ENCODE measurements at regions of chr3 and their contacts with region 1.

Region 1: DNA sequence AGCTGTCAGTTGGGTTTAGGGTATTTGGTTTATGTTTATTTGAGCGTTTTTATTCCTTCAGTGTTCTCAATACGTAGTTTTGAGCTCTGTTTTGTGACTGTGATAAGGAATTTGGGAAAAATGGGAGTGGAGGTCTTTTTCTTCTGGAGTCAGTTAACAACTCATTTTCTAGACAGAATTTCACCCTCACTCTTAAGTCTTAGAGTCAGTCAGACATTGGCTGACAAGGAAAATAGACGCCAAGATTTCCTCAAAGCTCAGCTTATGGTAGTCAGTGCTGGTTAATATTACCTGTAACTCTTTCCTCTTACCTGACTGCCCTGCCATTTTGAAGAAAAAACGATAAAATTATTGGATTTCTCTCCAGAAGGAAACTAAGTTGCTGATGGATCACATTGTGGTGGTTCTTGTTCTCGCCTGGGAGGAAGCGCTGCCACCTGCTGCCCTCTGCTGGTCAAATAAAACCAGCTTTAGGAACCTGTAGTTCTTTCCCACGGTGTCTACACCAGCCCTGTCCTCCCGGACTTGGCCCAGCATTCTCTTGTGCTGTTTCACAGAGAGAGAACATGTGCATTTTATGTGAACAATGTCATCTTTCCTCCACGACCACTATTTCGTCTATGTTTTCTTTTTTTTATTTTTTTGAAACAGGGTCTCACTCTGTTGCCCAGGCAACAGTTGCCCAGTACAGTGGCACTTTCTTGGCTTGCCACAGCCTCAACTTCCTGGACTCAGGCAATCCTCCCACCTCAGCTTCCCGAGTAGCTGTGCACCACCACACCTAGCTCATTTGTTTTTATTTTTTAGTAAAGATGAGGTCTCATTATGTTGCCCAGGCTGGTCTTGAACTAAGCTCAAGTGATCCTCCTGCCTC is 41.4 kb upstream of the UMPS start:
- DNase-seq: peak; percentile 82 to 93
- ATAC-seq: peak; percentile 98 to 99
- H3K4me3 ChIP-seq: no peak overlapping the region
- H3K27ac ChIP-seq: no peak overlapping the region
- H3K4me1 ChIP-seq: no peaks in the 10 kb centered on the region
- CTCF ChIP-seq: peak; percentile 96
- EP300 ChIP-seq: no peak
- POLR2A ChIP-seq: no peak
- RAD21 ChIP-seq: peak; percentile 94

Region 2: DNA sequence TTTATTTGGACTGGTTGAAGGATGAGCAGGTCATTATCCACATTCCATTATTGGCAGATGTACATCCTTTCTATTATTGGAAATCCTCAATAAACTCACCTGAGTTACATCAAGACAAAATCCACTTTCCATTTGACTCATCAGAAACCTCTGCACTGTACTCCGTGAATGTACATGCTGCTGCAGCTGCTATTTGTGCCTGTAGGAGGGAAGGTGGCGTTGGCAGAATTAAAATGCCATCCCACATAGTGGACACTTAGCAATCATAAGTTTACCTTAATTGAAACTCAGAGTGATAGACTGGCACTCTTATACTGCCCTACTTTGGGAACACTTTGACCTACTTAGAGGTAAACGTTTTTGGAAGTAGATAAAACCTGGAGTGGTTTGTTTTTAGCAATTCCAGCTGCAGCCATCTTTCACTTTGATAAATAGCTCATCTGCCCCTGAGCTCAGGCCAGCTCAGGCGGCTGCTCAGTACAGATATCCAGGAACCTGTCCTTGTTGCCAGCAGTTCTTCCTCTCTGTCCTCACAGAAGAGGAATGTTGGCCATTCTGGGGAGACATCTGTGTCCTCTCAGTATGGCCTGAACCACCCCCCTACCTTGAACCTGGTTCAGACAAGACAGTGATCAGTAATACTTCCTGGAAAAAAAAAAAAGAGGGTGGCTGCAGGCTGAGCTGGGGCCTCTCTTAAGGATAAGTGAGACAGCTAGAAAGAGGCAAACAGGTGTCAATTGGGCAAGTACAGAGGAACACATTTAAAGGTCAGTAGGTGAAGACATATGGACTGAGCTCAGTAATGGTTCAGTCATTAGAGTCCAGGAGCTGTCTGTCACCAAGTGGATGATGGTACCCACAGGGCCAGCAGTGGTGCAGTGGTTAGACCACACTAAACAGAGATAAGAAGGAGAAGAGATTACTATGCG is 112.0 kb before region 1 on chr3:
- CTCF ChIA-PET with region 1: interaction called, 42 read pairs
- POLR2A ChIA-PET with region 1: no interaction called
- DNase-seq: no peak
- ATAC-seq: peak in 1 of 2 experiments; percentile 68; a peak in 3 of 6 replicates
- H3K4me3 ChIP-seq: no peak overlapping the region
- H3K27ac ChIP-seq: no peak overlapping the region
- H3K4me1 ChIP-seq: no peaks in the 10 kb centered on the region
- CTCF ChIP-seq: no peak
- EP300 ChIP-seq: no peak
- POLR2A ChIP-seq: no peak
- RAD21 ChIP-seq: no peak

Region 3: GRCh38 chr3:124634210-124635168 is 54.3 kb before region 1 on chr3:
- CTCF ChIA-PET with region 1: interaction called, 12 read pairs
- POLR2A ChIA-PET with region 1: no interaction called
- DNase-seq: peak in 1 of 2 experiments; percentile 10
- ATAC-seq: peak in 1 of 2 experiments; percentile 33; a peak in 2 of 6 replicates
- H3K4me3 ChIP-seq: no peak overlapping the region; the same call in 2 of the 3 replicates
- H3K27ac ChIP-seq: peak overlapping the region; percentile 24 to 55; a peak in 4 of 6 replicates
- H3K4me1 ChIP-seq: peaks cover 26% of the 10 kb centered on the region
- CTCF ChIP-seq: no peak
- EP300 ChIP-seq: no peak
- POLR2A ChIP-seq: no peak
- RAD21 ChIP-seq: no peak

Region 4: DNA sequence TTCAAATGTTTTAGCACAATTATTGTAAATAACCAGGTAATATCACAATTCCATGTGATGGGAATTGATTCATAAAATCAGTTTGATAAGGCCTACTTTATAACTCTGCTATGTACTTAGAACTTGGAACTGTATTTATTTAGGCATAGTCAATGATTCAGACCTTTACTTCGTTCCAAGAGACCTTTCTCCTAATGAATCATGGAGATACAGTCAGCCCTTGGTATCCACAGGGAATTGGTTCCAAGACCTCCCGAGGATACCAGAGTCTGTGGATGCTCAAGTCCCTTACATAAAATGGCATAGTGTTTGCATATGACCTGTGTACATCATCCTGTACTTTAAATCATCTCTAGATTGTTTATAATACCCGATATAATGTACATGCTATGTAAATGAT is 19.3 kb before region 1 on chr3:
- CTCF ChIA-PET with region 1: interaction called, 22 read pairs
- POLR2A ChIA-PET with region 1: no interaction called
- DNase-seq: peak; percentile 25 to 38
- ATAC-seq: peak; percentile 84 to 92
- H3K4me3 ChIP-seq: no peak overlapping the region
- H3K27ac ChIP-seq: peak overlapping the region in 1 of 2 experiments; percentile 35; a peak in 1 of 6 replicates
- H3K4me1 ChIP-seq: peaks cover 28% of the 10 kb centered on the region
- CTCF ChIP-seq: no peak
- EP300 ChIP-seq: no peak
- POLR2A ChIP-seq: no peak
- RAD21 ChIP-seq: no peak

Region 5: DNA sequence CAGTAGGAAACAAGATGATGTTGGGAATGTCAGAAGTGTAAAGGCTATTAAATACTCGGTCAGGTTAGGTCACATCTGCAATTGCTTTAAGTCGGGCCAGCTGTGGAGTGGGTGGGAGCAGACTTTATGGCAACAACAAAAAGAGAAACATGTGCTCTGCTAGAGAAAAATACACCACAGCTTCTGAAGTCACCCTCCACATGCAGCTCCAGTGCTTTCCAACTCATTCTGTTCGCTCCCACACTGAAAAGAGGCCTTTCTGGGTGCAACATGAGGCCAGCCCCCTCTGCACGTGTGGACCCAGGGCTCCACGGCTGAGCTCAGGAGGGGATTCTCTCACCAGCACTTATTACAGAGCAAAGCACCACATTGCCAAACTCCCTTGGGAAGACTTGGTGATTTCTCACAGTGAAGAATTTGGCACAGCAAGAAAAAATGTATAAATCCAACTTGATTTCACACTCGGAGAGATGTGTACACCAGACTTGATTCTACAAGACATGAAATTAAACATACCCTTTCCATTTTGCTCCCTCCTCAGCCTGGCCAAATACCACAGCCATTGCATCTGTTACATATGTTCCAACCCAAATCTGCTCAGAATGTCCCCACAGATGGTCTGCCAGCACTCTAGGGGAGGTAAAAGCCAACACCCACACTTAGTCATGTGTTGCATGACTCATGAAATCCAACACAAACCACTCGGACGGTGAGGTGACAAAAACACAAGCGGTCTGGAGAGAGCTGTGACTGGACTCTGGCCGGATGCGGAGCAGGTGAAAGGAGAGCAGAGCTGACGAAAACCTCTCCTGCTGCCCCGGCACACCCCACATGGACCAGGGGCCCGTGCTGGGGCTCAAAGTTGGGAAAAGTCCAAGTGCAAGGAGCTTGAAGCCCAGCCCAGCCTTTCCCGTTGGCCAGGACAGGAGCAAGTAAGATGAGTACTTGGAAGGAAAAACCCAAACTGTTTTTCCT is 123.8 kb after region 1 on chr3:
- CTCF ChIA-PET with region 1: no interaction called
- POLR2A ChIA-PET with region 1: no interaction called
- DNase-seq: peak; percentile 91 to 94
- ATAC-seq: peak; percentile 80 to 85
- H3K4me3 ChIP-seq: peak overlapping the region; percentile 27; the same call in 2 of the 3 replicates
- H3K27ac ChIP-seq: peak overlapping the region; percentile 86 to 90
- H3K4me1 ChIP-seq: peaks cover 78% of the 10 kb centered on the region
- CTCF ChIP-seq: no peak
- EP300 ChIP-seq: peak; percentile 48 to 73; a peak in 2 of 5 replicates
- POLR2A ChIP-seq: no peak
- RAD21 ChIP-seq: peak in 1 of 2 experiments; percentile 43; a peak in 2 of 5 replicates

Measured in A549 (cell line).